ENCODE measurements at regions of chr10 and their contacts with region 1.

Region 1: DNA sequence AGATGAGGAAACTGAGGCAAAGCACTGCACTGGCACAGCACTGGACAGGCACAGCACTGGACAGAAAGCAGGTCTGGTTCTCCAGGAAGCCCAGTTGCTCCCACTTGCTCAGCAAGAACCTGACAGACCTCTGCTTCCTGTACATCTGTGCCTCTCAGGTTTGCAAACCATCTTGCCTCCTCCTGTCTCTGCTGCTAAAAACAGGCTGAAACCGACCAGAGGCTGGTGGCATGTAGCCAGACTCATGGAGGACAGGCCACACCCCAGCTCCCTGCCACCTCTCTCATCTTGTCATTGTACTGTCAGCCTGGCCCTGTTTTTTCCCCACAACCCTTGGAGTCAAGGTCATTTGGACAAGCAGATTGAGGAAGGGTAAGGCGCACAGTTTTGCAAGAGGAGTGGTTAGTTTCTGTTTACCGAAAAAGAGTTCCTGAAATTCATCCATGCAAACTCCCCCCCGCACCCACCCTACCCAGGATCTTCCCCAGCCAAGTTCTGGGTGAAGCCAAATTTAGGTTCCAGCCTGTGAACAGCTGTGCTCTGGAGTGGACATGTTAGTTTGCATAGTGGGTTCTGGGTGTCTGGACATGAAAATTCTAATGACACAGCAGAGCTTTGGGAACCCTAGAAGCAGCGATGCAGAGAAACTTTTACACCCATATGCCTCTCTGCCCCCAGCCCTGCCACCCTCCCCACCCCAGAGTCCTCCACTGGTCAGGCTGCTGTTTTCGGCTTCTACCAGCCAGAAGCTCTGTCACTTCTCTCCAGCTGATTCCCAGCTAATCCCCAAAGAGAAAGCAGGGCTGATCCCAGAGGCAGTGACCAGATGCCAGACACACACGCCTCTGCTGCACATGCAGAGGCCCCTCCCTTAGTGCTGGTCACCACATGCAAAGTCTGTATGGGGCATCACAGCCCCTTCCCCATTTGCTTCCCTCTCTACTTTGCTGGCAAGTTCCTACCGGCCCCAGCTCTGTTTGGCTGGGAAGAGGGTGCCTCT is 8.5 kb upstream of the C10orf105 start:
- DNase-seq: peak; percentile 87
- H3K4me3 Mint-ChIP-seq: peak overlapping the region; percentile 64
- H3K27ac Mint-ChIP-seq: peak overlapping the region; percentile 98
- H3K4me1 Mint-ChIP-seq: peaks cover 90% of the 10 kb centered on the region
- H3K27me3 Mint-ChIP-seq: no peaks in the 10 kb centered on the region

Region 2: DNA sequence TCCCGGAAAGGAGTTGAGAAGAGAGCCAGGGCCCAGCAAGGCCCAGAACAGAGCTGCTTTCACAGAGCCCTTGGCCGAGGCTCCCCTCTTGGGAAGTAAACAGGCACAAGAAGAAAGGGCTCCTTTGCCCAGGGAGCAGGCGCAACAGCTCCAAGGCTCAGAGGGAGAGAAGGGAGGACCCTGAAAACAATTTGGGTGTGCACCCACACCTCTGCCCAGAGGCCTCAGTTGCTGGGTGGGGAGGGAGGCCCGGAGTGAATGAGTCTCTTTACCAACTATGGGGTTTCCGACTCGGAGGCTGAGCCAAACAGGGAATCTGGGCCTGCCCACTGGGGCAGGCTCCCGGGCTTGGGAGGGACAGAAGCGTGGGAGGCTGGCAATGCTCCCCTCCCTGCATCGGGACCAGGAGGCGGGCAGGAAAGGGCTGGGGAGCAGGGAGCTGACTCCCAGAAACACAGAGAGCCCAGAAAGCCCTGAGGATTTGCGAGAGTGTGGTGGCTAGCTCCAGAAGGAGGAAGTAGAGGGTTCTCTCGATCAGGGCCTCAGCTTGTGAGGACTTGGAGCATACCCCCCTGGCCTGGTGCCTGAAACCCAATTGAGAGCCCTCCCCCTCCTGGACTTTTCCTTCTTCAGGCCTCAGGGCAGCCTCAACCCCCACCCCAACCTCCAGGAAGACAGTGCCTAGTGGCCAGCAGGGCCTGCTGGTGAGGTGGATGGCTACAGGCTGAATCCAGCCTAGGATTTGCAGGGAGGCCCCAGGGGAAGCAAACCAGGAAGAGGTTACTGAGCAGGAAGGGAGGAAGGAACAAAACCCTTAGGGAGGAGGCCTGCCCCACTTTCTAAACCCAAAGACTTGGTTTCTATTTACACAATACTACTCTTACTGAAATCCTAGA is 14.7 kb before region 1 on chr10:
- CTCF ChIA-PET with region 1: interaction called, 15 read pairs
- intact Hi-C with region 1: loop called (anchors 1 kb)
- DNase-seq: peak; percentile 54
- H3K4me3 Mint-ChIP-seq: peak overlapping the region; percentile 67
- H3K27ac Mint-ChIP-seq: peak overlapping the region; percentile 94
- H3K4me1 Mint-ChIP-seq: peaks cover 64% of the 10 kb centered on the region
- H3K27me3 Mint-ChIP-seq: no peaks in the 10 kb centered on the region

Region 3: GRCh38 chr10:71748671-71749191 is 20.7 kb after region 1 on chr10:
- CTCF ChIA-PET with region 1: interaction called, 22 read pairs
- intact Hi-C with region 1: loop called (anchors 1 kb)
- DNase-seq: peak; percentile 90
- H3K4me3 Mint-ChIP-seq: peak overlapping the region; percentile 64
- H3K27ac Mint-ChIP-seq: peak overlapping the region; percentile 98
- H3K4me1 Mint-ChIP-seq: peaks cover 94% of the 10 kb centered on the region
- H3K27me3 Mint-ChIP-seq: no peaks in the 10 kb centered on the region

Region 4: DNA sequence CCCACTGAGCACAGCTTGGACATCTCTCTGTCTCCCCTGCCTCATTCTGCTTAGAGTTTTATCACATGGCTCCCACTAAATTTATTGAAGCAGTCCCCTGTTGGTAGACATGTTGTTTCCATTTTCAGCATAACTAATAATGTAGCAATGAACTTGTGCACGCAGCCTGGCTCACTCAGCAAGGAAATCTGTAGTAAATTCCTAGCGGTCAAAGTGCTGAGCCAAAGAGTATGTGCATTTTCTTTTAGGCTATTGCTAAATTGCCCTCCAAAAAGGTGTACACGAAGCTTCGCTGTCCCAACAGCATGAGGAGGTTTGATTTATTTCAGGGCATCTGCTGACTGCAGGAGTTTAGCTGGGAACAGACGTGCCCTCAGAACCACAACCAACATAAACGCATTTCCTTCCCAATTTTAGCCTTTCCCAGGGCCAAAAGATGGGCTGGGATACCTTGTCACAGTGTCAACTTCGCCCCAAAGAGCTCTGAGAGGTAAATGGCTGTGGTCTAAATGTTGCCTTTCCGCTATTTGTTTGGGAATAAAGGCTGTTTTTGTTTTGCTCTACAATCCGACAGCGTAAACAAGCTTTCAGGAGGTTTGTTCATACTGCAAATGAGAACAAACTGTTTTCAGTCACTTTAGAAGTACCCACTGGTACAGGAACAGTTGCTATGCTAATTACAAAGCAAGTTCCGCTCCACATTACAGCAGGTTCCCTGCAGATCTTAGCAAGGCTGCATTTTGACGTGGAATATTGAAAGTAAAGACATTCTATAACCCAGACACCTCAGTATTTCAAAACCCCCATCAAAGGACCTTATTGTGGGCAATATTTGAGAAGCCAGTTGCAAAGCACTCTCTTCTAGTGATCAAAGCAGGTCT is 28.5 kb after region 1 on chr10:
- CTCF ChIA-PET with region 1: interaction called, 16 read pairs
- intact Hi-C with region 1: loop called (anchors 1 kb)
- DNase-seq: peak; percentile 71
- H3K4me3 Mint-ChIP-seq: peak overlapping the region; percentile 68
- H3K27ac Mint-ChIP-seq: peak overlapping the region; percentile 96
- H3K4me1 Mint-ChIP-seq: peaks cover 88% of the 10 kb centered on the region
- H3K27me3 Mint-ChIP-seq: no peaks in the 10 kb centered on the region

Region 5: DNA sequence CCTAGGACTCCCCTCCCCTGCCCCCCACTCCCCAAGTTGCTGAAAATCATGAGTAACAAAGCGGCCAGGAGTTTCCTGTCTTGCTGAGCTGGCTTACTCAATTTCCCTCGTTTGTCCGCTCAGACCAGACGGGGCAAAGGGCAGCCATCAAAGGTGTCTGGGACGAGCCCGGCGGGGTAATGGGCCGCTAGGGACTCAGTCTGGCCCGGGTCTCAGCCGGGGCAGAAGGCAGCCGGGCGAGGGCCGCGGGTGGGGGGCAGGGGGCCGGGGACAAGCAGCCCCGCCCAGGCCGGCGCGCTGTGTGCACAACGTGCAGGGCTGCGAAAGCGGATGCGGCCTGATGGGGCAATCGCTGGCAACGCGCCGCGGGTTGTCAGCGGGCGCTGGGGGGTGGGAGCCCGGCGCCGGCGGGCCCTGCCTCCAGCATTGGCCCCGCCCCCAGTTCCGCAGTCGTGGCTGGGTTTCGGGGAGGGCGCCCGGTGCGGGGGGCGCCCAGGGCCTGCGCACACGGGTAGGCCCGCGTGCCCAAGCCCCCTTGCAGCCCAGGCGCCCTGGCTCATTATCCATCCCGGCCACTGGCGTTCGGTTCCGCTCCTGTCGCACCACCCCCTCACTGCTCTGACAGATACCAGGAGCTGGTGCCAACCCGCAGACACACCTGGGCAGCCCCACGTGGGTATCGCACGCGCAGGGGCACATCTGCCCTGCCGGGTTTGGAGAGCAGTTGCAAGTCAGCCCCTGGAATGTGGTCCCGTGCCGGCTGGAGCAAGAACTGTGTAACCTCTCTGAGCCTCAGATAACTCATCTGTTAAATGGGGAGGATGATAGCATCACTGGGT is 591.6 kb after region 1 on chr10:
- CTCF ChIA-PET with region 1: no interaction called
- intact Hi-C with region 1: loop called (anchors 2 kb)
- DNase-seq: peak; percentile 94
- H3K4me3 Mint-ChIP-seq: peak overlapping the region; percentile 86
- H3K27ac Mint-ChIP-seq: peak overlapping the region; percentile 99
- H3K4me1 Mint-ChIP-seq: peaks cover 79% of the 10 kb centered on the region
- H3K27me3 Mint-ChIP-seq: no peaks in the 10 kb centered on the region

Measured in activated naive CD4-positive, alpha-beta T cell treated with anti-CD3 and anti-CD28 coated beads for 36 hours (primary cell).